Esophagus muscularis mucosa (tissue), 4 donors: ENCODE measurements at regions of chr5 and their contacts with region 1.

Region 1: GRCh38 chr5:65102828-65103711 is 334.3 kb downstream of the CWC27 start:
- DNase-seq: no peak
- H3K4me3 ChIP-seq: peak overlapping the region; percentile 60 to 74 (median 64)
- H3K27ac ChIP-seq: peak overlapping the region; percentile 77 to 90 (median 85)
- H3K4me1 ChIP-seq: peaks cover 10 to 30% (median 21%) of the 10 kb centered on the region in 4 donors
- H3K27me3 ChIP-seq: no peaks in the 10 kb centered on the region
- CTCF ChIP-seq: peak; percentile 41 to 48 (median 48)
- EP300 ChIP-seq: no peak
- POLR2A ChIP-seq: no peak

Region 2: DNA sequence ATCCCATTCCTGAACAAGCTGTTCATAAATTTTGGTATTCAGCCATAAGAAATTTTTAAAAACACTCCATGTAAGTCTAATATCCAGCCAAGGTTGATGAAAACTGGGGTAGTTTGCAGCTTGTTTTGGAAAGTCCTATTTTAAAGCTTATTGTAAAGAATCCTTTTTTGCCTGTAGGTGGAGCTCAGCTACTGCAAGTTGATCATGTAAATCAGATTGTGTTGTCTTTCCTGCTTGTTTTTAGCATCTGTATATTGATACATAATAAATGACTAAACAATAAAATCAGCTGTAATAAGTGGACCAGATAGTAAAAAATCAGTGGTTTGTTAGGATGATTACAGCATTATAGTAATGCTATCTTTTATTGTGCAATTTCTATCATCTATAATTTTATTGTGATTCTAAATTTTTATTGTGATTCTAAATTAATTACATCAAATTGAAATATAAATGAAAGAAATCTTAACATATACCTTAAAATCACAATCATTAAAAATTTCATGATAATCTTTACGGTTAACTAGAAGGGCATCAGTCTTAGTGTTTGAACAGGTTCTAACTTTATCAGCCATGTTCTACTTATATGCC is 291.9 kb before region 1 on chr5:
- intact Hi-C with region 1: loop called (anchors 10 kb)
- DNase-seq: no peak
- H3K4me3 ChIP-seq: no peak overlapping the region
- H3K27ac ChIP-seq: no peak overlapping the region
- H3K4me1 ChIP-seq: peaks cover 4 to 12% (median 9%) of the 10 kb centered on the region in 4 donors
- H3K27me3 ChIP-seq: no peaks in the 10 kb centered on the region
- CTCF ChIP-seq: peak; percentile 57 to 68 (median 65)
- EP300 ChIP-seq: no peak
- POLR2A ChIP-seq: no peak

Region 3: DNA sequence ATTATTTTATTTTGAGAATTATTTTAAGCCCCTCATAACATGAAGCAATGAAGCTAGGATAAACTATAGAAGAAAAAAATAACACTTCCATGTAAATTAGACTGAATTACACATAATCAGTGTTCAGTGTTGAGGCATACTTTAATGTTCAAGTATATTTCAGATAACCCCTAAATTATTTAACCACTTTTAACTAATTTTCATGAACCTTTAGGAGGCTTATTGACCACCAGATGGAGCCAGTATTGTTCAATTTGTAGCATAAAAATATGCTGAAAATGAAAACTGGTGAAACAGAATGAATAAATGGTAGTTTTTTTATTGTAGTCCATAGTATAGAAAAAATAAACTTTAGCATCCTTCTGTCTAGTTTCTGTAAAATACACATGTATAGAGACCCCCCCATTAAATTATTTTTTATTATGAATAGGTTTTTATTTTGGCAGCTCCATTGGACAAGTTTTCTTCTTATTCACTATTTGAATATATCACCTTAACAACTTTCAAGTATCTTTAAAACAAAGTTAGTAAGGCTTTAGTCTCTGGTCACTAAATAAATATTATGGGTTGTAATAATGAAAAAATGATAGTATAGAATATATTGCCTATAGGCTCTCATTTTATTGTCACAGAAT is 144.2 kb before region 1 on chr5:
- intact Hi-C with region 1: loop called (anchors 5 kb)
- DNase-seq: no peak
- H3K4me3 ChIP-seq: no peak overlapping the region
- H3K27ac ChIP-seq: no peak overlapping the region
- H3K4me1 ChIP-seq: no peaks in the 10 kb centered on the region
- H3K27me3 ChIP-seq: no peaks in the 10 kb centered on the region
- CTCF ChIP-seq: peak; percentile 49 to 71 (median 59)
- EP300 ChIP-seq: no peak
- POLR2A ChIP-seq: no peak

Region 4: GRCh38 chr5:65035211-65036206 is 67.6 kb before region 1 on chr5:
- intact Hi-C with region 1: loop called (anchors 5 kb)
- DNase-seq: peak; percentile 96
- H3K4me3 ChIP-seq: peak overlapping the region; percentile 68 to 86 (median 70)
- H3K27ac ChIP-seq: peak overlapping the region; percentile 90 to 95 (median 94)
- H3K4me1 ChIP-seq: peaks cover 25 to 35% (median 32%) of the 10 kb centered on the region in 4 donors
- H3K27me3 ChIP-seq: no peaks in the 10 kb centered on the region
- CTCF ChIP-seq: no peak
- EP300 ChIP-seq: no peak
- POLR2A ChIP-seq: peak; percentile 3

Region 5: GRCh38 chr5:65262649-65263059 is 159.6 kb after region 1 on chr5:
- intact Hi-C with region 1: no loop called
- DNase-seq: no peak
- H3K4me3 ChIP-seq: no peak overlapping the region
- H3K27ac ChIP-seq: no peak overlapping the region
- H3K4me1 ChIP-seq: peaks cover 0 to 9% (median 0%) of the 10 kb centered on the region in 4 donors
- H3K27me3 ChIP-seq: no peaks in the 10 kb centered on the region
- CTCF ChIP-seq: no peak
- EP300 ChIP-seq: no peak
- POLR2A ChIP-seq: no peak